ENCODE measurements at regions of chr5 and their contacts with region 1.

Region 1: GRCh38 chr5:107456281-107456715 is 214.4 kb downstream of the EFNA5 start:
- DNase-seq: no peak
- H3K4me3 ChIP-seq: no peak overlapping the region
- H3K4me3 Mint-ChIP-seq: no peak overlapping the region
- H3K27ac Mint-ChIP-seq: no peak overlapping the region
- H3K4me1 ChIP-seq: peaks cover 34% of the 10 kb centered on the region
- H3K4me1 Mint-ChIP-seq: peaks cover 27% of the 10 kb centered on the region
- H3K27me3 ChIP-seq: no peaks in the 10 kb centered on the region
- H3K27me3 Mint-ChIP-seq: no peaks in the 10 kb centered on the region
- CTCF ChIP-seq: no peak

Region 2: DNA sequence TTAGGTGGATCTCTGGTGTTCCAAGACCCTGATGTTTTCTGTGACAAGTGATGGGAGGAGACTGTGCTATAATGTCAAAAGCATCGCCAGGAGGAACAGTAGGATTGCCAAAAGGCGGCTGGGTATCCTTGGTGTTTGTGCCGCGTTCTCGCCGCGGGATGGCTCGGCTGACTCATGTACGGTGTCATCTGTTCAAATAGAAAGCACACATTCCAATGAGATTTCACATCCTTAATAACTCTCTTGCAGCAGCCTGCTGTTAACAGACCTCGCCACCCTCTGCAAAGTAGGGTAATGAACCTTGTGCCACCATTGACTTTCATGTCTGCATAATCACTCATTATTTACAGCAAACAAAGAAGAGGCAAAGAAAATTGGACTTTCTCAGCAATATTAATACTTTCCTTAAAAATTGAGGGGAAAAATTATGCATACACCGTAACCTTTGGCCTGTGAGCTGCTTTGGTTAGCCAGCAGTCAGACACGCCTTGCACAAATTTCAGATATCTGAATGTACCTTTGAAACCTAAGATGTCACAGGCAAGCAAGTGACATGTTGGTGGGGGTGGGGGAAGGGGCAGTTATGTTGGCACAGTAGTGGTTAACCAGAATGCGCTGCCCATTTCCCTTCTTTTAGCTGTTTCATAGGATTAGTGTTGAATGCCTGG is 75.0 kb before region 1 on chr5:
- CTCF ChIA-PET with region 1: no interaction called
- POLR2A ChIA-PET with region 1: interaction called, 3 read pairs
- intact Hi-C with region 1: loop called (anchors 5 kb)
- DNase-seq: peak; percentile 32 to 52
- H3K4me3 ChIP-seq: no peak overlapping the region
- H3K4me3 Mint-ChIP-seq: no peak overlapping the region
- H3K27ac Mint-ChIP-seq: no peak overlapping the region
- H3K4me1 ChIP-seq: peaks cover 27% of the 10 kb centered on the region
- H3K4me1 Mint-ChIP-seq: peaks cover 8% of the 10 kb centered on the region
- H3K27me3 ChIP-seq: no peaks in the 10 kb centered on the region
- H3K27me3 Mint-ChIP-seq: no peaks in the 10 kb centered on the region
- CTCF ChIP-seq: no peak